Kidney (tissue), 22 donors: ENCODE measurements at regions of chr10 and their contacts with region 1.

Region 1: DNA sequence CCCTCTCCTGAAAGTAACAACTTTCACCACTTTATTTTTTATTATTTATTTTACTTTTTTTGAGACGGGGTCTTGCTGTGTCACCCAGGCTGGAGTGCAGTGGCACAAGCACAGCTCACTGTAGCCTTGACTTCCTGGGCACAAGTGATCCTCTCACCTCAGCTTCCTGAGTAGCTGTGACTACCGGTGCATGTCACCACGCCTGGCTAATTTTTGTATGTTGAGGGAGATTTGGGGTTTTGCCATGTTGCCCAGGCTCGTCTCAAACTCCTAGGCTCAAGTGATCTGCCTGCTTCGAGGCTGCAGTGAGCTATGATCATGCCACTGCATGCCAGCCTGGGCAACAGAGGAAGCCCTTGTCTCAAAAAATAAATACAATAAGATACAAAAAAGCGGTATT is 14.9 kb upstream of the SLIT1 start:
- DNase-seq: peak in 2 of 5 donors; percentile 32 to 38
- H3K4me3 ChIP-seq: no peak overlapping the region
- H3K27ac ChIP-seq: no peak overlapping the region
- H3K4me1 ChIP-seq: peaks cover 0 to 3% (median 0%) of the 10 kb centered on the region in 3 donors
- H3K27me3 ChIP-seq: no peaks in the 10 kb centered on the region
- CTCF ChIP-seq: no peak

Region 2: GRCh38 chr10:97072851-97073665 is 127.6 kb before region 1 on chr10:
- intact Hi-C with region 1: loop called (anchors 10 kb)
- DNase-seq: peak; percentile 84 to 93 (median 90)
- H3K4me3 ChIP-seq: no peak overlapping the region
- H3K27ac ChIP-seq: no peak overlapping the region
- H3K4me1 ChIP-seq: no peaks in the 10 kb centered on the region
- H3K27me3 ChIP-seq: no peaks in the 10 kb centered on the region
- CTCF ChIP-seq: peak; percentile 89

Region 3: DNA sequence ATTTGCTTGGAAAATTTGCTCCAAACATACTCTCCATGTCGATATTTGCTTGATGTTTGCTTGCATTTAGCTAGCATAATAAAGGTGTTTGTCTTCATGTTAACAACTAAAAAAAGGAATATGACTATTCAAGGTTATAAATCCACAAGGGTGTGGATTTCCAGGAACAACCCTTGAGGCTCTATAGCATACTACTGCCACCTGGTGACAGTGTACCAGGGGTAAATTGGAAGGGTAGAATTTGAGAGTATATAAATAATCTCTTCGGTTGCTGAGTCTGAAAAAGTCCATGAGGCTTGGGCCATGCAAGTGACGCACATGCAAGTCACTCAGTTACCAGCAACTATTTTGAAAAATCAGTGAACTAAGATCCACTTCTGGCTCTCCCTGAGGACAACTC is 83.2 kb before region 1 on chr10:
- intact Hi-C with region 1: no loop called
- DNase-seq: no peak
- H3K4me3 ChIP-seq: no peak overlapping the region
- H3K27ac ChIP-seq: no peak overlapping the region
- H3K4me1 ChIP-seq: no peaks in the 10 kb centered on the region
- H3K27me3 ChIP-seq: no peaks in the 10 kb centered on the region
- CTCF ChIP-seq: no peak